CD4-positive, alpha-beta memory T cell (primary cell): ENCODE measurements at regions of chr4 and their contacts with region 1.

Region 1: DNA sequence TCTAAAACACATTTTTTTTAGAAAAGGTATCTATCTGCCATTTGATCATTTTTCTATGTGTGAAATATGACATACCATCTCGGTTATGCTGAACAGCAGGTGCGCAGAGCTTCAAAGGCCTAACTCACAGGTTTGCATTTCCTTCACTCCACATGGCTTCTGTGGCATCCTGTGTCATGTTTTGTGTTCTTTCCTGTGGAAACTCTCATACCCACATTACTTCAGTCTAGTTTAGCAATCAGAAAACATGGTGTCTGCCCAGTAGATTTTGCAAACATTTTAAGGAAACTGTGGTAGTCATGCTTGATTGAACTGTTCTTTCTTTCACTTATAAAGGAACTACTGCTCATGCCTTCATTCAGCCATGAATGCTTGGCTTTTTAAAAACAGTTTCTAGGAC is 11.3 kb upstream of the ARAP2 start:
- DNase-seq: peak; percentile 83 to 91 (median 89)
- H3K4me3 ChIP-seq: no peak overlapping the region
- H3K4me3 Mint-ChIP-seq: peak overlapping the region; percentile 71 to 88 (median 80)
- H3K27ac ChIP-seq: peak overlapping the region; percentile 27
- H3K27ac Mint-ChIP-seq: peak overlapping the region; percentile 83 to 96 (median 92)
- H3K4me1 ChIP-seq: peaks cover 48% of the 10 kb centered on the region
- H3K4me1 Mint-ChIP-seq: peaks cover 35 to 55% (median 40%) of the 10 kb centered on the region in 4 donors
- H3K27me3 ChIP-seq: no peaks in the 10 kb centered on the region
- H3K27me3 Mint-ChIP-seq: no peaks in the 10 kb centered on the region

Region 2: GRCh38 chr4:36269101-36269500 is 13.5 kb after region 1 on chr4:
- CTCF ChIA-PET with region 1: interaction called, 5 read pairs
- POLR2A ChIA-PET with region 1: interaction called, 9 read pairs
- intact Hi-C with region 1: loop called (anchors 1 kb)
- DNase-seq: peak; percentile 56 to 81 (median 76)
- H3K4me3 ChIP-seq: no peak overlapping the region
- H3K4me3 Mint-ChIP-seq: peak overlapping the region in 4 of 8 donors; percentile 9 to 51 (median 39)
- H3K27ac ChIP-seq: peak overlapping the region; percentile 44
- H3K27ac Mint-ChIP-seq: peak overlapping the region; percentile 76 to 94 (median 89)
- H3K4me1 ChIP-seq: peaks cover 26% of the 10 kb centered on the region
- H3K4me1 Mint-ChIP-seq: peaks cover 21 to 36% (median 27%) of the 10 kb centered on the region in 4 donors
- H3K27me3 ChIP-seq: no peaks in the 10 kb centered on the region
- H3K27me3 Mint-ChIP-seq: no peaks in the 10 kb centered on the region

Region 3: DNA sequence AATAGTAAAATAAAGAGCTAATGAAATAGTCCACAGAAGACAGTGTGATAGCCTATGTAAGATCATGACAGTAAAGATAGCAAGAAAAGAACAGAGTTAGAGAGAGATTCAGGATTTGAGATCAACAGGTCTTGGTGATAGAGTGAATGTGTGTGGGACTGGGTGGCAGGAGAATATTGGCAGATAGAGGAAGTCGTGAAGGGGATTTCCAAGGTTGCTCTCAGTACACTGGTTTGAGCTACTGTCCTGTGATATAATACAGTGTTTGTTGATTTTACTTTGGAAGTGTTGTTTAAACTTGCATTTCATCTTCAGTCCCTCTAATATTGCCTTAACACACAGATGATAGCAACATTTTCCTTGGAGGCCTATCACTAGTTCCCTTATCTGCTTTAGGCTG is 69.9 kb after region 1 on chr4:
- CTCF ChIA-PET with region 1: interaction called, 3 read pairs
- POLR2A ChIA-PET with region 1: interaction called, 7 read pairs
- intact Hi-C with region 1: loop called (anchors 2 kb)
- DNase-seq: peak; percentile 13 to 48 (median 25)
- H3K4me3 ChIP-seq: no peak overlapping the region
- H3K4me3 Mint-ChIP-seq: peak overlapping the region in 6 of 8 donors; percentile 4 to 63 (median 46)
- H3K27ac ChIP-seq: peak overlapping the region; percentile 22
- H3K27ac Mint-ChIP-seq: peak overlapping the region; percentile 47 to 87 (median 81)
- H3K4me1 ChIP-seq: peaks cover 41% of the 10 kb centered on the region
- H3K4me1 Mint-ChIP-seq: peaks cover 38 to 63% (median 46%) of the 10 kb centered on the region in 4 donors
- H3K27me3 ChIP-seq: no peaks in the 10 kb centered on the region
- H3K27me3 Mint-ChIP-seq: no peaks in the 10 kb centered on the region

Region 4: GRCh38 chr4:36394352-36394903 is 138.9 kb after region 1 on chr4:
- CTCF ChIA-PET with region 1: interaction called, 23 read pairs
- POLR2A ChIA-PET with region 1: interaction called, 10 read pairs
- intact Hi-C with region 1: loop called (anchors 1 kb)
- DNase-seq: peak; percentile 72 to 91 (median 81)
- H3K4me3 ChIP-seq: no peak overlapping the region
- H3K4me3 Mint-ChIP-seq: peak overlapping the region in 5 of 8 donors; percentile 8 to 76 (median 46)
- H3K27ac ChIP-seq: peak overlapping the region; percentile 34
- H3K27ac Mint-ChIP-seq: peak overlapping the region; percentile 82 to 92 (median 89)
- H3K4me1 ChIP-seq: peaks cover 16% of the 10 kb centered on the region
- H3K4me1 Mint-ChIP-seq: peaks cover 13 to 25% (median 16%) of the 10 kb centered on the region in 4 donors
- H3K27me3 ChIP-seq: no peaks in the 10 kb centered on the region
- H3K27me3 Mint-ChIP-seq: no peaks in the 10 kb centered on the region